Activated B cell treated with CpG ODN at 0.5 μM for 24 hours (primary cell): ENCODE measurements at regions of chr6 and their contacts with region 1.

Region 1: DNA sequence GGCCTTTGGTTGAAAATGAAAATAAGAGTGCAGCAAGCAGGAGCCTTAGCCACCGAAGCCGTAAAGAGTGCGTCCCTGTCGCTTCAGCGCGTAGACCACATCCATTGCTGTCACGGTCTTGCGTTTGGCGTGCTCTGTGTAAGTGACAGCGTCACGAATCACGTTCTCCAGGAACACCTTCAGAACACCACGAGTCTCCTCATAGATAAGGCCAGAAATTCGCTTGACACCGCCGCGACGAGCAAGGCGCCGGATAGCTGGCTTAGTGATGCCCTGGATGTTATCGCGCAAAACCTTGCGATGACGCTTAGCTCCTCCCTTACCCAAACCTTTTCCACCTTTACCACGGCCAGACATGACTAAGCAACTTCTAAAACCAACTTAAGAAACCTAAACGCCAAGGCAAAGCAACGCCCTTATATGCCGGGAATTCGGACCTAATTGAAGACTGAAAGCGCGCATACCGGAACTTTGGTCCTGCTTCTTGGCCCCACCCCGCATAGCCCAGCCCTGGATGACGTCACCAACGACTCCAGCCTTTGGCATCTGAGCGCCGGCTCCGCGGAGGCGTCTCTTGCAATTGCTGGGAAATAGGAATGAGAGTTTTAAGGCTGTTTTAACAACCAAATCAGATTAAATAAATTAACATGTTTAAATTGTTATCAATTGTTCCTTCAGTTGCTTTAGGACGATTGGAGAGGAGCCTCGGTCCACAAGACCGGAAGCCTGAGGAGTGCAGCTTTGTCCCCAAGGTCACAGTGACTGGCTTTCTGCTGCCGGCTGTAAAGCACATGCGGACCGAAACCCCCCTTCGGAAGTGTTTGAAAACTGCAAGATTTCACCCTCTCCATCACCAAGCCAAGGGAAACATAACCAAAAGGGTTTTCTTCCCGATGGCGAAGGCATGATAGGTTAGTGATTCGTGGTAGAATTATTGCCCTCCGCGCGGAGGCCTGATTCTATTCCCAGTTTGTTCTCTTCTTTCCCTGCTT is 79.6 kb upstream of the BTN3A2 start:
- DNase-seq: peak; percentile 80
- ATAC-seq: peak; percentile 75
- H3K4me3 Mint-ChIP-seq: peak overlapping the region; percentile 86
- H3K27ac Mint-ChIP-seq: peak overlapping the region; percentile 96
- H3K4me1 Mint-ChIP-seq: peaks cover 29% of the 10 kb centered on the region
- H3K27me3 Mint-ChIP-seq: peaks cover 3% of the 10 kb centered on the region
- CTCF ChIP-seq: no peak

Region 2: DNA sequence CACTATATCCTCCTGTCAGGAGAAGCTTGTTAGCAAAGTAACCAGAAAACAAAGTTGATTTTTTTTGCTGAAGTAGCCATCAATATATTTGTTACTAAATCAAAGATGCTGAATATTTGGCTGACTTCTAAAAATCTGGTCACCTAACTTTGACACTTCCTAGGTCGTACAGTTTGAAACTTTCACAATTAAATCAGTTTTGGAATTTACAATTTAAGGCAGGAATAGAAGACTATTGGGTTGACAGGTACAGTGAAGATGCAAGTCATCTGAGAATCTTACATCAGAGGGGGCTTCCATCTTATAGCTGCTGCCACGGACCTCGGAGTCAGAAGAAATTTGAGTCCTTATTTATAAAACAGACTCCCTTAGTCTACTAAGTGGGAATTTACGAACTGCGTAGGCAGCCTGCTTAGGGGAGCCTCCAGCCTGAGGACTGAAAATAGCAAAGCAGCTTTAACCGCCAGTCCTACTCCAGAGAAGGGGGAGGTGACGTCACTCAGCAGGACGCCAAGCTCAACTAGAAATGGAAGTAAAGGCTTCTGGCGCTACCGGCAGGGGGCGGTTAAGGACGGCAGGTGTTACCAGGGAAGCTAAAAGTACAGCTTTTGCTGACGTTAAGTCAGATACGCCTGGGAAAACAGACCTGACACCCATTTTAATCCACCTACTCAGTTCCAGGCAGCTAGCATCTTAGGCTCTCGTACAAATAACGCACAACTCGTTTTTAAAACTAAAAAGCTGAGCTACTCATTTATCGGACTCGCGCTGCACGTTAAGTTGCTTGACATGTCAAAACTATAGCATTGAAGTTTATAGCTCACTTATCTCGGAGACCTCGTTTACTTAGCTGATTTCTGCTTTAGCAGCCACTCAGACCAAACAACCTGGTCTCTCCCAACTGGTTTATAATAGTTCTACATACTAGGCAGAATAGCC is 259.3 kb before region 1 on chr6:
- CTCF ChIA-PET with region 1: no interaction called
- POLR2A ChIA-PET with region 1: interaction called, 14 read pairs
- intact Hi-C with region 1: no loop called
- DNase-seq: peak; percentile 76
- ATAC-seq: peak; percentile 39
- H3K4me3 Mint-ChIP-seq: peak overlapping the region; percentile 96
- H3K27ac Mint-ChIP-seq: peak overlapping the region; percentile 99
- H3K4me1 Mint-ChIP-seq: peaks cover 35% of the 10 kb centered on the region
- H3K27me3 Mint-ChIP-seq: peaks cover 2% of the 10 kb centered on the region
- CTCF ChIP-seq: no peak

Region 3: GRCh38 chr6:26175428-26176181 is 109.8 kb before region 1 on chr6:
- CTCF ChIA-PET with region 1: no interaction called
- POLR2A ChIA-PET with region 1: interaction called, 32 read pairs
- intact Hi-C with region 1: loop called (anchors 1 kb)
- DNase-seq: no peak
- ATAC-seq: no peak
- H3K4me3 Mint-ChIP-seq: no peak overlapping the region
- H3K27ac Mint-ChIP-seq: peak overlapping the region; percentile 65
- H3K4me1 Mint-ChIP-seq: peaks cover 38% of the 10 kb centered on the region
- H3K27me3 Mint-ChIP-seq: no peaks in the 10 kb centered on the region
- CTCF ChIP-seq: no peak

Region 4: GRCh38 chr6:26223650-26224546 is 61.5 kb before region 1 on chr6:
- CTCF ChIA-PET with region 1: no interaction called
- POLR2A ChIA-PET with region 1: interaction called, 17 read pairs
- intact Hi-C with region 1: loop called (anchors 1 kb)
- DNase-seq: no peak
- ATAC-seq: peak; percentile 87
- H3K4me3 Mint-ChIP-seq: no peak overlapping the region
- H3K27ac Mint-ChIP-seq: no peak overlapping the region
- H3K4me1 Mint-ChIP-seq: peaks cover 4% of the 10 kb centered on the region
- H3K27me3 Mint-ChIP-seq: no peaks in the 10 kb centered on the region
- CTCF ChIP-seq: no peak

Region 5: GRCh38 chr6:26264547-26264946 is 20.9 kb before region 1 on chr6:
- CTCF ChIA-PET with region 1: no interaction called
- POLR2A ChIA-PET with region 1: no interaction called
- intact Hi-C with region 1: no loop called
- DNase-seq: no peak
- ATAC-seq: no peak
- H3K4me3 Mint-ChIP-seq: no peak overlapping the region
- H3K27ac Mint-ChIP-seq: no peak overlapping the region
- H3K4me1 Mint-ChIP-seq: no peaks in the 10 kb centered on the region
- H3K27me3 Mint-ChIP-seq: no peaks in the 10 kb centered on the region
- CTCF ChIP-seq: no peak

Region 6: GRCh38 chr6:26322645-26323482 is 37.4 kb after region 1 on chr6:
- CTCF ChIA-PET with region 1: no interaction called
- POLR2A ChIA-PET with region 1: interaction called, 8 read pairs
- intact Hi-C with region 1: loop called (anchors 1 kb)
- DNase-seq: no peak
- ATAC-seq: peak; percentile 56
- H3K4me3 Mint-ChIP-seq: peak overlapping the region; percentile 89
- H3K27ac Mint-ChIP-seq: peak overlapping the region; percentile 85
- H3K4me1 Mint-ChIP-seq: peaks cover 25% of the 10 kb centered on the region
- H3K27me3 Mint-ChIP-seq: peaks cover 14% of the 10 kb centered on the region
- CTCF ChIP-seq: no peak

Region 7: DNA sequence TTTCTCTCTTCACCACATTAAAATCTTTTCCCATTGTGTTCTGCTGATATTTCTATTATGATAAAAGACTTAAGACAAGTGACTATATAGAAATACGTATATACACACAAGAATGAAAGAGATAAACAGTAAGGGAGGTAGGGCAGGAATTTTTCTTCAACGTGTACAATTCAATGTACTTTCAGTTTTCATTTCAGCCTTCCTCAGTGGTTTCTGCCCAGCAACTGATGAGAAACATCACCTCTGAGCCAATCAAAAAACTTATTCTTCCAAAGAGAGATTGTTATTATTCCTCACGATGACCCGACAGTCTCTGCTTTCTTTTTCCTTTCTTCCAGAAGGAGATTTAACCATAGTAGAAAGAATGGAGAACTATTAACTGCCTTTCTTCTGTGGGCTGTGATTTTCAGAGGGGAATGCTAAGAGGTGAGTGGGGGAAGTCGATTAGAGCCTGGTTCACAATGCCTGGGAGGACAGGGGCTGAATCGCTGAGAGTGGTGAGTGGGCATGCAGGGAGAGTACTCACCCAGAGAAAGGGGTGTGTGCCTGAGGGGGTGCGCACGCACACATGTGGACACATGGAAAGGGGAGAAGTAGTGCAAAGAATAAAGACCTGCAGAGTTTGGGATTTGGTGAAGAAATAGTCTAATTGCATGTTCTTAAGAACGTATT is 116.7 kb after region 1 on chr6 and contains the start of gene BTN3A1:
- CTCF ChIA-PET with region 1: no interaction called
- POLR2A ChIA-PET with region 1: no interaction called
- intact Hi-C with region 1: no loop called
- DNase-seq: peak; percentile 43
- ATAC-seq: peak; percentile 87
- H3K4me3 Mint-ChIP-seq: peak within 1 kb of the TSS; percentile 98
- H3K27ac Mint-ChIP-seq: peak within 1 kb of the TSS; percentile 98
- H3K4me1 Mint-ChIP-seq: peaks cover 65% of the 10 kb centered on the region
- H3K27me3 Mint-ChIP-seq: no peaks in the 10 kb centered on the region
- CTCF ChIP-seq: no peak
- total RNA-seq, gene BTN3A1: 55.4 and 61.7 TPM in 2 replicates

Region 8: DNA sequence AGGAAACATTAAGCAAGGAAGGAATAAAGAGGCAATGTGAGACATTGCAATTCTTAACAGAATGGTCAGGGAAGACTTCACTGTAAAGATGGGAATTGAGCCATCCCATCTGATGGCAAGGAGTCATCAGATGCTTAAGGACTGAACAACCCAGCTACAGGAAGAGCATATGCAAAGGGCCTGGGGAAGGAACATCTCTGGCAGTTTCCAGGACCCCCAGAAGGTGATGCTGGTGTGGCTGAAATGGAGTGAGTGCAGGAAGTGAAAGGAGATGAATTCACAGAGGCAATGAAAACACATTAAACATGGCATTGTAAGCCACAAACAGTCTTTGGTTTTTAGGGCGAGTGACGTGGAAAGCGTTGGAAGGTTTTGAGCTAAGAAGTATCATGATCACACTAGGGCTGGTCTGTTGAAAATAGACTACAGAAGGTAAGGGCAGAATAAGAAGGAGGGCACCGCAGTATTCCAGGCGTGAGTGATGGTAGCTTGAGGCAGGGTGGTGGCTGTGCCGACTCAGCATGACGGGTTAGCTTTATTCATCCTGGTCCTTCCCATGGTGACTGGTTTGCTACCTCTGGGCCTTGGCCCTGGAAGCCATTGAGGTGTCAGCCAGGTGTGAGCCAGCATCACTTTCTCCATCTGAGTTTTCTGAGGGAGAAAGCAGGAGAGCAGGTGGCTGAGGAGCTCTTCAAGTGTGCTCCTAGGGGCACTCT is 179.1 kb after region 1 on chr6:
- CTCF ChIA-PET with region 1: no interaction called
- POLR2A ChIA-PET with region 1: no interaction called
- intact Hi-C with region 1: no loop called
- DNase-seq: no peak
- ATAC-seq: no peak
- H3K4me3 Mint-ChIP-seq: no peak overlapping the region
- H3K27ac Mint-ChIP-seq: peak overlapping the region; percentile 64
- H3K4me1 Mint-ChIP-seq: peaks cover 65% of the 10 kb centered on the region
- H3K27me3 Mint-ChIP-seq: no peaks in the 10 kb centered on the region
- CTCF ChIP-seq: no peak

Region 9: DNA sequence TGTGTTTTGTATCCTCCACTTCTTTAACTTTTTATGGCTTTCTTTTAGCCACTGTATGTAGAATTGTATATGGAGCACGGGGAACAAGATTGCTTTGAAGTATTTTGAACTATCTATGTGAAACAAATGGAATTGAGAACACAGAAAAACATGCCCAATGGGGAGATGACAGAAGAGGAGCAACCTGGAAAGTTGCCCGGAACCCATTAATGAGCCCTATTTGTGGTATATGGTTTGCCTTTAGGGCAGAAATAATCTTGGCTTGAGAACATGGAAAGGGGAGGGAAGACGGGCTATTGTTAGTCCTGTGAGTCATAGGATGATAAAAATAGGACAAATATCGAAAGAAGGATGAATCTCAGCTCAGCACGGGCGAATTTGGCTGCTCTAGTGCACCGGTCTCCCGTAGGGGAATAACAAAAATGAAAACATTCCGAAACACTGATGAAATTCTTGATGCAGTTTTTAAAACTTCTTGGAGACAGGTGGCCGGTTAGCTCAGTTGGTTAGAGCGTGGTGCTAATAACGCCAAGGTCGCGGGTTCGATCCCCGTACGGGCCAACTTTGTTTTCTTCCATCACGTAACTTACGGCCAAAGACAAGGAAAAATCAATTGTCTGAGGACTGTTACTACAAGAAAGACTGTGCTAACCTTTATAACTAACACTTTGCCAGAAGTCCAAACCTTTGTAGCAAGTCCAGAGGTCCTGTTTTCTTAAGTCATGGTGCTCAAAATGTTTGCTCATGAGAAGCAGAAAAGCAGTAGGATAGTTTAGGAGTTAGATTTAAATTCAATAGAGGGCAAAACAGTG is 268.4 kb after region 1 on chr6:
- CTCF ChIA-PET with region 1: no interaction called
- POLR2A ChIA-PET with region 1: interaction called, 6 read pairs
- intact Hi-C with region 1: loop called (anchors 1 kb)
- DNase-seq: peak; percentile 67
- ATAC-seq: peak; percentile 46
- H3K4me3 Mint-ChIP-seq: no peak overlapping the region
- H3K27ac Mint-ChIP-seq: no peak overlapping the region
- H3K4me1 Mint-ChIP-seq: peaks cover 28% of the 10 kb centered on the region
- H3K27me3 Mint-ChIP-seq: no peaks in the 10 kb centered on the region
- CTCF ChIP-seq: no peak

Region 10: GRCh38 chr6:27472617-27473400 is 1187.4 kb after region 1 on chr6 and contains the start of gene ZNF184:
- CTCF ChIA-PET with region 1: no interaction called
- POLR2A ChIA-PET with region 1: interaction called, 5 read pairs
- intact Hi-C with region 1: loop called (anchors 10 kb)
- DNase-seq: peak; percentile 85
- ATAC-seq: peak; percentile 92
- H3K4me3 Mint-ChIP-seq: peak within 1 kb of the TSS; percentile 95
- H3K27ac Mint-ChIP-seq: peak within 1 kb of the TSS; percentile 95
- H3K4me1 Mint-ChIP-seq: peaks cover 34% of the 10 kb centered on the region
- H3K27me3 Mint-ChIP-seq: no peaks in the 10 kb centered on the region
- CTCF ChIP-seq: no peak
- total RNA-seq, gene ZNF184: 8.1 and 8.6 TPM in 2 replicates